CD8-positive, alpha-beta T cell (primary cell): ENCODE measurements at regions of chr1 and their contacts with region 1.

Region 1: DNA sequence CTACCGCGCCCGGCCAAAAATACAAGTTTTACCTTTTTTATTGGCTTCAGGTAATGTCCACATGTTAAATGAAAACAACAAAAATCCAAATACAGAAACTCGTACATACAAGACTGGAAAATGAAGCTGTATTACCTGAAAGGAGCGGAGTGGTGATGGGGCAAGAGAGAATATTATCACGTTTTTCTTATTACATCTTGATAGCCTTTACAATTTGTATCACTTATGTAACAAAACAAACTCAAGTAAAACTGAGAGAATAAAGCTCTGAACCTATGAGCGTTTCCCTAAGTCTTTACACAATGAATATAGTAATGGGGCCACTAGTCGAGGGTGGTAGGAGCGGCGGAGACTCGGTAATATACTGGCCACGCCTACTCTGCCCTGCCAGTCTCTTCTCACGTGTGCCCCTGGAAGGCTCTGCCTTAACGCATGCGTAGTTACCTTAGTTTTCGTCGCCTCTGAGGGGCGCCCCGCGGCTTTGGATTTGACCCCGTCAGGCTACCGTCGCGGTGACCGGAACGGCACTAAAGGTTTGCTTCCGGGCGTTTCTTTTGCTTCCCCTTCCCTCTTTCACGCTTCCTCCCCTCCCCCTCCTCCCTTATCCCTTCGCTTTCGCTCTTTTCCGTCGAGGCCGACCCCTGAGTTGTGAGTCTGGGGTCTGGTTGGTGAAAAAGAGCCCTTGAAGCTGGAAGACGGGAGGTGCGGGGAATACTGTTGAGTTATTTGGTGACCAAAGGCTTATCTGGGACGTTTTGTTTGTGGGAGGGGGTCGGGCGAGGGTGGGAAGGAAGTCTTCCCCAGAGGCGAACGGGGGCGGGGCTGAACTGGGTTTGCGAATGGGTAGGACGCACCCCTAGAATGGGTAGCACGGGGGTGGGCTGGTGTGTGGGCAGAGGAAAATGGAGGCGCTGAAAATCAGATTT is at the start of gene SETDB1:
- DNase-seq: peak; percentile 84 to 98 (median 91)
- ATAC-seq: peak; percentile 96
- H3K4me3 ChIP-seq: peak within 1 kb of the TSS; percentile 91 to 93
- H3K4me3 Mint-ChIP-seq: peak within 1 kb of the TSS; percentile 94
- H3K27ac ChIP-seq: peak within 1 kb of the TSS; percentile 79 to 93
- H3K27ac Mint-ChIP-seq: peak within 1 kb of the TSS; percentile 93
- H3K4me1 ChIP-seq: peaks cover 17% of the 10 kb centered on the region
- H3K4me1 Mint-ChIP-seq: peaks cover 31% of the 10 kb centered on the region
- H3K27me3 ChIP-seq: no peaks in the 10 kb centered on the region
- H3K27me3 Mint-ChIP-seq: no peaks in the 10 kb centered on the region
- CTCF ChIP-seq: no peak
- total RNA-seq, gene SETDB1: 44.1 to 47.4 TPM

Region 2: DNA sequence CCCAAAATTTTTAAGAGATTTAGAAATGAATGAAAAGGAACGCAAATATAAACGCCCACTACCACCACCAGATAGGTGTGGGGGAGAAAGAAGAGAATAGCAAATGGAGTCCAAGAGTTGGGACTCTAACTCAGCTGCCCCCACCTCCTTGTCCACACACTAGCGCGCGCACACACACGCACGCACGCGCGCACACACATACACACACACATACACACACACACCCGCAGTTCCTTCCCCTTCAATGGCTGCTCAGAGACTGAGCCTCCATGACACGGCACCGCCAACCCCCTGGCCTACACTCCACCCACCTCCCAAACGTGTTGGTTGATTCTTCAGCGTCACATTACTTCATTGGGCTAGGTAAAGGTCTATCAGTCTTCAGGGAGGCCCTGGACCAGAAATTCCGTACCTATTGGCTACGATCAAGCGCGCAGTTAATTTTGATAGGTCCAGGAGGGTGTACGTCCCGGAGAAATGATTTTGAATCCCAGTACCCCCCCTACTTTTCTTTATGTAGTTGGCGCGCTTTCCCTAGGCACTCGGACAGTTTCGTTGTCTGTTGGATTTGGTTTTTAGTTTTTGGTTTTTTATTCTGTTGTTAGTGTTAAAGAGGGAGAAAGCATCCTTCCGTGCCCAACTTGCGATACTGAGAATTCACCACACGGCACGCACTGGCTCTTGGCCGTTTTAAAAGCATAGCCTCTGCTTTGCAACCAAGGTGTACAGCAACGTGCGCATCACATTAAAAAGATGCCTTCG is 690.0 kb before region 1 on chr1 and contains the start of gene ANP32E:
- CTCF ChIA-PET with region 1: no interaction called
- POLR2A ChIA-PET with region 1: no interaction called
- intact Hi-C with region 1: loop called in 1 of 2 experiments (anchors 10 kb)
- DNase-seq: peak; percentile 86 to 99 (median 94)
- ATAC-seq: peak; percentile 90
- H3K4me3 ChIP-seq: peak within 1 kb of the TSS; percentile 72 to 80
- H3K4me3 Mint-ChIP-seq: no peak within 1 kb of the TSS
- H3K27ac ChIP-seq: peak within 1 kb of the TSS; percentile 89 to 96
- H3K27ac Mint-ChIP-seq: peak within 1 kb of the TSS; percentile 93
- H3K4me1 ChIP-seq: peaks cover 12% of the 10 kb centered on the region
- H3K4me1 Mint-ChIP-seq: peaks cover 18% of the 10 kb centered on the region
- H3K27me3 ChIP-seq: no peaks in the 10 kb centered on the region
- H3K27me3 Mint-ChIP-seq: no peaks in the 10 kb centered on the region
- CTCF ChIP-seq: no peak
- total RNA-seq, gene ANP32E: 30.6 to 35.0 TPM

Region 3: GRCh38 chr1:150696590-150697524 is 229.2 kb before region 1 on chr1 and contains the start of gene GOLPH3L:
- CTCF ChIA-PET with region 1: no interaction called
- POLR2A ChIA-PET with region 1: no interaction called
- intact Hi-C with region 1: loop called (anchors 1 to 5 kb)
- DNase-seq: peak; percentile 76 to 97 (median 88)
- ATAC-seq: peak; percentile 98
- H3K4me3 ChIP-seq: peak within 1 kb of the TSS; percentile 81 to 88
- H3K4me3 Mint-ChIP-seq: peak within 1 kb of the TSS; percentile 98
- H3K27ac ChIP-seq: peak within 1 kb of the TSS; percentile 70 to 81
- H3K27ac Mint-ChIP-seq: peak within 1 kb of the TSS; percentile 92
- H3K4me1 ChIP-seq: peaks cover 7% of the 10 kb centered on the region
- H3K4me1 Mint-ChIP-seq: peaks cover 38% of the 10 kb centered on the region
- H3K27me3 ChIP-seq: no peaks in the 10 kb centered on the region
- H3K27me3 Mint-ChIP-seq: peaks cover 2% of the 10 kb centered on the region
- CTCF ChIP-seq: no peak
- total RNA-seq, gene GOLPH3L: 1.6 to 1.8 TPM

Region 4: GRCh38 chr1:150841626-150842025 is 84.5 kb before region 1 on chr1:
- CTCF ChIA-PET with region 1: interaction called, 5 read pairs
- POLR2A ChIA-PET with region 1: no interaction called
- intact Hi-C with region 1: loop called in 1 of 2 experiments (anchors 5 kb)
- DNase-seq: peak in 2 of 9 experiments; percentile 40 to 71
- ATAC-seq: peak; percentile 79
- H3K4me3 ChIP-seq: no peak overlapping the region
- H3K4me3 Mint-ChIP-seq: no peak overlapping the region
- H3K27ac ChIP-seq: peak overlapping the region in 1 of 2 experiments; percentile 53
- H3K27ac Mint-ChIP-seq: peak overlapping the region; percentile 9
- H3K4me1 ChIP-seq: peaks cover 26% of the 10 kb centered on the region
- H3K4me1 Mint-ChIP-seq: peaks cover 26% of the 10 kb centered on the region
- H3K27me3 ChIP-seq: no peaks in the 10 kb centered on the region
- H3K27me3 Mint-ChIP-seq: no peaks in the 10 kb centered on the region
- CTCF ChIP-seq: no peak

Region 5: DNA sequence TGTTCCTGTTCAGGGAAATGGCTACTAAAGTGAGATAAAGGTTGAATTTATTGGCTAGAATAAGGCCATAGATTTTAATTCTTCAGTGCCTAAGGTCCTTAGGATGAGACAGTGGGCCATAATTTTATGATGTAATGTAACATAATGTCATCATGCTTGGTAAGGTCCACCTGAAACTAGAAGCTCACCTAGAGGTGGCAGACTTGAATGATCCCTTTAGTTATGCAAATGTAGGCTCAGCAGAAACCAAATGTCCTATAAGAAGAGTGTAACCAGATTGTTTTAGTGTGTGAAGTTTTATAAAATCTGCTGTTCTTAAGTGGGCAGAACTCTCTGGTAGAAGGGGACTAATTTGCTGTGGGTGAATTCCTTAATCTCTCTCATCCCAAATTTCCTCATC is 13.5 kb before region 1 on chr1:
- CTCF ChIA-PET with region 1: interaction called, 19 read pairs
- POLR2A ChIA-PET with region 1: no interaction called
- intact Hi-C with region 1: no loop called
- DNase-seq: no peak
- ATAC-seq: no peak
- H3K4me3 ChIP-seq: no peak overlapping the region
- H3K4me3 Mint-ChIP-seq: no peak overlapping the region
- H3K27ac ChIP-seq: no peak overlapping the region
- H3K27ac Mint-ChIP-seq: no peak overlapping the region
- H3K4me1 ChIP-seq: no peaks in the 10 kb centered on the region
- H3K4me1 Mint-ChIP-seq: no peaks in the 10 kb centered on the region
- H3K27me3 ChIP-seq: no peaks in the 10 kb centered on the region
- H3K27me3 Mint-ChIP-seq: no peaks in the 10 kb centered on the region
- CTCF ChIP-seq: no peak

Region 6: DNA sequence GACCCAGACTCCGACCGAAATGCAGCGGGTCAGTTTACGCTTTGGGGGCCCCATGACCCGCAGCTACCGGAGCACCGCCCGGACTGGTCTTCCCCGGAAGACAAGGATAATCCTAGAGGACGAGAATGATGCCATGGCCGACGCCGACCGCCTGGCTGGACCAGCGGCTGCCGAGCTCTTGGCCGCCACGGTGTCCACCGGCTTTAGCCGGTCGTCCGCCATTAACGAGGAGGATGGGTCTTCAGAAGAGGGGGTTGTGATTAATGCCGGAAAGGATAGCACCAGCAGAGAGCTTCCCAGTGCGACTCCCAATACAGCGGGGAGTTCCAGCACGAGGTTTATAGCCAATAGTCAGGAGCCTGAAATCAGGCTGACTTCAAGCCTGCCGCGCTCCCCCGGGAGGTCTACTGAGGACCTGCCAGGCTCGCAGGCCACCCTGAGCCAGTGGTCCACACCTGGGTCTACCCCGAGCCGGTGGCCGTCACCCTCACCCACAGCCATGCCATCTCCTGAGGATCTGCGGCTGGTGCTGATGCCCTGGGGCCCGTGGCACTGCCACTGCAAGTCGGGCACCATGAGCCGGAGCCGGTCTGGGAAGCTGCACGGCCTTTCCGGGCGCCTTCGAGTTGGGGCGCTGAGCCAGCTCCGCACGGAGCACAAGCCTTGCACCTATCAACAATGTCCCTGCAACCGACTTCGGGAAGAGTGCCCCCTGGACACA is 122.0 kb after region 1 on chr1:
- CTCF ChIA-PET with region 1: no interaction called
- POLR2A ChIA-PET with region 1: no interaction called
- intact Hi-C with region 1: no loop called
- DNase-seq: peak in 8 of 9 experiments; percentile 43 to 86 (median 67)
- ATAC-seq: peak; percentile 81
- H3K4me3 ChIP-seq: peak overlapping the region; percentile 89 to 98
- H3K4me3 Mint-ChIP-seq: peak overlapping the region; percentile 91
- H3K27ac ChIP-seq: peak overlapping the region; percentile 53 to 88
- H3K27ac Mint-ChIP-seq: peak overlapping the region; percentile 91
- H3K4me1 ChIP-seq: peaks cover 39% of the 10 kb centered on the region
- H3K4me1 Mint-ChIP-seq: peaks cover 64% of the 10 kb centered on the region
- H3K27me3 ChIP-seq: no peaks in the 10 kb centered on the region
- H3K27me3 Mint-ChIP-seq: no peaks in the 10 kb centered on the region
- CTCF ChIP-seq: peak; percentile 51

Region 7: GRCh38 chr1:151059078-151059907 is 133.2 kb after region 1 on chr1 and contains the start of gene CDC42SE1:
- CTCF ChIA-PET with region 1: no interaction called
- POLR2A ChIA-PET with region 1: no interaction called
- intact Hi-C with region 1: no loop called
- DNase-seq: peak; percentile 72 to 95 (median 86)
- ATAC-seq: peak; percentile 75
- H3K4me3 ChIP-seq: peak within 1 kb of the TSS; percentile 90 to 93
- H3K4me3 Mint-ChIP-seq: peak within 1 kb of the TSS; percentile 99
- H3K27ac ChIP-seq: peak within 1 kb of the TSS; percentile 88 to 95
- H3K27ac Mint-ChIP-seq: peak within 1 kb of the TSS; percentile 98
- H3K4me1 ChIP-seq: peaks cover 29% of the 10 kb centered on the region
- H3K4me1 Mint-ChIP-seq: peaks cover 56% of the 10 kb centered on the region
- H3K27me3 ChIP-seq: no peaks in the 10 kb centered on the region
- H3K27me3 Mint-ChIP-seq: no peaks in the 10 kb centered on the region
- CTCF ChIP-seq: peak; percentile 81
- total RNA-seq, gene CDC42SE1: 275 to 282 TPM

Region 8: DNA sequence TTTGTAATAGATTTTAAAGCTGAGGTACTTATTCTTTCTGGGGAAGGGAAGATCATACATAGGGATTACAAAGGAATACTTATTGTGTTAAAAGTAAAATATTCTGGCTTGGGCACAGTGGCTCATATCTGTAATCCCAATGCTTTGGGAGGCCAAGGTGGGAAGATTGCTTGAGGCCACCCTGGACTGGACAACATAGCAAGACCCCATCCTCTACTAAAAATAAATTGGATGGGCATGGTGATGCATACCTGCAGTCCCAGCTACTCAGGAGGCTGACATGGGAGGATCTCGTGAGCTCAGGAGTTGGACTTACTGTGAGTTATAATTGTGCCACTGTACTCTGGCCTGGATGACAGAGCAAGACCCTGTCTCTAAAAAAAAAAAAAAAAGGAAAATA is 172.0 kb after region 1 on chr1:
- CTCF ChIA-PET with region 1: no interaction called
- POLR2A ChIA-PET with region 1: no interaction called
- intact Hi-C with region 1: no loop called
- DNase-seq: no peak
- ATAC-seq: no peak
- H3K4me3 ChIP-seq: no peak overlapping the region
- H3K4me3 Mint-ChIP-seq: no peak overlapping the region
- H3K27ac ChIP-seq: no peak overlapping the region
- H3K27ac Mint-ChIP-seq: no peak overlapping the region
- H3K4me1 ChIP-seq: no peaks in the 10 kb centered on the region
- H3K4me1 Mint-ChIP-seq: no peaks in the 10 kb centered on the region
- H3K27me3 ChIP-seq: no peaks in the 10 kb centered on the region
- H3K27me3 Mint-ChIP-seq: no peaks in the 10 kb centered on the region
- CTCF ChIP-seq: no peak

Region 9: GRCh38 chr1:151267760-151268159 is 341.7 kb after region 1 on chr1:
- CTCF ChIA-PET with region 1: no interaction called
- POLR2A ChIA-PET with region 1: no interaction called
- intact Hi-C with region 1: no loop called
- DNase-seq: no peak
- ATAC-seq: no peak
- H3K4me3 ChIP-seq: no peak overlapping the region
- H3K4me3 Mint-ChIP-seq: no peak overlapping the region
- H3K27ac ChIP-seq: no peak overlapping the region
- H3K27ac Mint-ChIP-seq: peak overlapping the region; percentile 4
- H3K4me1 ChIP-seq: no peaks in the 10 kb centered on the region
- H3K4me1 Mint-ChIP-seq: no peaks in the 10 kb centered on the region
- H3K27me3 ChIP-seq: no peaks in the 10 kb centered on the region
- H3K27me3 Mint-ChIP-seq: no peaks in the 10 kb centered on the region
- CTCF ChIP-seq: no peak